ENCODE measurements at regions of chr1 and their contacts with region 1.

Region 1: DNA sequence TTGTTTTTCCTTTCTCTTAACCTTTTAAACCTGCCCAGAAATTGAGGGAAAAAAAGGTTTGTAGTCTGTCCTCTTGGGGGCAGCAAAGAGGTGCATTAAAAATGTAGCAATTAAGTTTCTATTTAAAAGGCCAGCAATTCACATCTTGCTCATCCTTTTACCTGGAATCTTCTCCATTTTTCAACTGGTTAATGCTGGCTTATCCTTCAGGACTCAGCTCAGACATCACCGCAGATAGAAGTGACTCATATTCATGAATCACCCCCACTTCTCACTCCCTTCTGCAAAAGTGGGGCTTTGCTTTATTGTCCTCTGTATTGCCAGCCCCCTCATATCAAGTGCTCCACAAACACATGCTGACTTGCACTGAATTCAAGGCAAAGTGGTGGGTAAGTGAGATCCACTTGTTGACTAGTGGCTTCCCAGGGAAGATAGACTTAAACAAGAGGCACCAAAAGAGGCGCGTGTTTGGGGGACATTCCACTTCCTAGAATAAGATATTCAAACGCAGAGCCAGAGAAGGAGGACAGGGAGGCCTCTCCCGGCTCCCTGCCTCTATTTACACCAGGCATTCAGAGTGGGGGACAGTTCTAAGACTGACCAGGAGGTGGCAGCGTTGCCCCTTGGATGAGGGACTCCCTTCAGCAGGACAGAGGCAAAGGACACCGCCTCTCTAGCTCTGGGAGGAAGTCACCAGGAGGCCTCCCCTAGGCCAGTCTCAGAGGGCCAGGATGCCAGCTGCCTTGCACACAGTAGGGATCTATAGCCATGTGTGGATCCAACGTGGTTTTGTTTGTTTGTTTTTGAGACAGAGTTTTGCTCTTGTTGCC is 23.2 kb upstream of the ZNF648 start:
- DNase-seq: peak; percentile 86 to 92
- H3K4me3 ChIP-seq: no peak overlapping the region
- H3K4me3 Mint-ChIP-seq: no peak overlapping the region
- H3K27ac Mint-ChIP-seq: no peak overlapping the region
- H3K4me1 ChIP-seq: peaks cover 33% of the 10 kb centered on the region
- H3K4me1 Mint-ChIP-seq: peaks cover 8% of the 10 kb centered on the region
- H3K27me3 ChIP-seq: no peaks in the 10 kb centered on the region
- H3K27me3 Mint-ChIP-seq: no peaks in the 10 kb centered on the region
- CTCF ChIP-seq: peak; percentile 72 to 92

Region 2: GRCh38 chr1:181479137-181479745 is 605.5 kb before region 1 on chr1:
- CTCF ChIA-PET with region 1: interaction called, 18 read pairs
- POLR2A ChIA-PET with region 1: no interaction called
- intact Hi-C with region 1: loop called (anchors 2 kb)
- DNase-seq: peak; percentile 52 to 66
- H3K4me3 ChIP-seq: no peak overlapping the region
- H3K4me3 Mint-ChIP-seq: no peak overlapping the region
- H3K27ac Mint-ChIP-seq: no peak overlapping the region
- H3K4me1 ChIP-seq: no peaks in the 10 kb centered on the region
- H3K4me1 Mint-ChIP-seq: peaks cover 7% of the 10 kb centered on the region
- H3K27me3 ChIP-seq: no peaks in the 10 kb centered on the region
- H3K27me3 Mint-ChIP-seq: peaks cover 3% of the 10 kb centered on the region
- CTCF ChIP-seq: peak; percentile 74 to 88

Region 3: GRCh38 chr1:182054698-182055326 is 29.9 kb before region 1 on chr1:
- CTCF ChIA-PET with region 1: interaction called, 12 read pairs
- POLR2A ChIA-PET with region 1: no interaction called
- intact Hi-C with region 1: no loop called
- DNase-seq: peak in 1 of 2 experiments; percentile 64
- H3K4me3 ChIP-seq: no peak overlapping the region
- H3K4me3 Mint-ChIP-seq: no peak overlapping the region
- H3K27ac Mint-ChIP-seq: no peak overlapping the region
- H3K4me1 ChIP-seq: no peaks in the 10 kb centered on the region
- H3K4me1 Mint-ChIP-seq: no peaks in the 10 kb centered on the region
- H3K27me3 ChIP-seq: no peaks in the 10 kb centered on the region; the same call in 1 of the 2 replicates
- H3K27me3 Mint-ChIP-seq: no peaks in the 10 kb centered on the region
- CTCF ChIP-seq: peak; percentile 32 to 45

Region 4: DNA sequence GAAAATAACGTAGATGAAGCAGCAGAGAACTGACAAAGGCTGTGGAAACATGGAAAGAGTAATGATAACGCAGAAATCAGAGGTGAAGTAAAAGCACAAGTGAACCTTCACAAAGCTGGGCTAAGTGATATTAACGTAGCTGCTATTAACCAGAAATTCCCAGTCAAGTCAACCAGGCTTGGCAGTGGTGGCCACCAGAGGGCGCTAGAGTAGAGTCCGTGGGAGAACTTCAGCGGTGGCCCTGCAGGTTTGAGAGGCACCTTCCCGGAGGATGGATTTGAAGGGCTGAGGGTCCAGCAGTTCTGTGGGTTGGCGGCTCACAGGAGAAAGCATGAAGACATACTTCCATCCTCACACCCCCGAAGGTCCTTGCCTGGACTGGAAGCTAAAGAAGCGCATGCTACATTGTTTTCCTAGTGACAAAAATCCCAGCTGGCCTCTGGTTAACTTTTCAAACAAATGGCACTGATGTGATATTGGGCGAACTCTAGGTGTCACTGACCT is 58.5 kb after region 1 on chr1:
- CTCF ChIA-PET with region 1: interaction called, 20 read pairs
- POLR2A ChIA-PET with region 1: no interaction called
- intact Hi-C with region 1: loop called (anchors 1 kb)
- DNase-seq: peak; percentile 87 to 92
- H3K4me3 ChIP-seq: no peak overlapping the region
- H3K4me3 Mint-ChIP-seq: no peak overlapping the region
- H3K27ac Mint-ChIP-seq: peak overlapping the region; percentile 63
- H3K4me1 ChIP-seq: peaks cover 34% of the 10 kb centered on the region
- H3K4me1 Mint-ChIP-seq: peaks cover 48% of the 10 kb centered on the region
- H3K27me3 ChIP-seq: no peaks in the 10 kb centered on the region
- H3K27me3 Mint-ChIP-seq: no peaks in the 10 kb centered on the region
- CTCF ChIP-seq: peak; percentile 92 to 97

Region 5: DNA sequence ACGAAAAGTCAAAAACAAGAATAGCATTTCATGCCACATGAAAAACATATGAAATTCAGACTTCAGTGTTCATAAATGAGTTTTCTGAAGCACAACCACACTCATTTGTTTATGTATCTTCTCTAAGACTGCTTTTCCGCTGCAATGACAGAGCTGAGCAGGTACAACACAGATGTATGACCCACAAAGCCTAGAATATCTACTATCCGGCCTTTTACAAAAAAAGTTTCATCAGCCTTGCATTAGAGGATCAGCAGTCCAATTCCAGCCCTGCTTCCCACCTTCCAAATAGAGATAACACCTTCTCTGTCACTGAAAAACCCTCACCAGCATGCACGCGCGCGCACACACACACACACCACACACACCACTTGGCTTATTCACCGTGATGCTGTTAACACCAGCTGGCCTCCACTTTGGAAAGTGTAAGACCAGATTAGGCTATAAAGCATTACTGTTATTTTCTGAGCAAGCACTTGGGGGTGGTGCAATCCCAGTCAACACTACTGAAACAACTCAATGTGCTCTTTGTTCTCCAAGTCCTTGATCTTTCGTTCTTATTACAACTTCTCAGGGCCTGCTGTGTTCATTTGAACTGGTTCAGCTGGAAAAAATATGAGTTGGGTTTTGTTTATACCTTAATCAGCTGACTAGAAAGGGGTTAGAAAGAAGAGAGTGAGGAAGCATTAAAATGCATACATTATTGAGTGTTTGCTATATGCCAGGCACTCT is 216.9 kb after region 1 on chr1:
- CTCF ChIA-PET with region 1: interaction called, 3 read pairs
- POLR2A ChIA-PET with region 1: no interaction called
- intact Hi-C with region 1: loop called (anchors 1 kb)
- DNase-seq: peak; percentile 50 to 61
- H3K4me3 ChIP-seq: no peak overlapping the region
- H3K4me3 Mint-ChIP-seq: no peak overlapping the region
- H3K27ac Mint-ChIP-seq: peak overlapping the region; percentile 29
- H3K4me1 ChIP-seq: peaks cover 30% of the 10 kb centered on the region
- H3K4me1 Mint-ChIP-seq: peaks cover 31% of the 10 kb centered on the region
- H3K27me3 ChIP-seq: no peaks in the 10 kb centered on the region
- H3K27me3 Mint-ChIP-seq: no peaks in the 10 kb centered on the region
- CTCF ChIP-seq: no peak

Region 6: GRCh38 chr1:182446033-182446669 is 361.4 kb after region 1 on chr1:
- CTCF ChIA-PET with region 1: no interaction called
- POLR2A ChIA-PET with region 1: no interaction called
- intact Hi-C with region 1: loop called (anchors 1 kb)
- DNase-seq: peak in 1 of 2 experiments; percentile 53
- H3K4me3 ChIP-seq: no peak overlapping the region
- H3K4me3 Mint-ChIP-seq: no peak overlapping the region
- H3K27ac Mint-ChIP-seq: no peak overlapping the region
- H3K4me1 ChIP-seq: no peaks in the 10 kb centered on the region
- H3K4me1 Mint-ChIP-seq: no peaks in the 10 kb centered on the region
- H3K27me3 ChIP-seq: no peaks in the 10 kb centered on the region
- H3K27me3 Mint-ChIP-seq: no peaks in the 10 kb centered on the region
- CTCF ChIP-seq: peak; percentile 62 to 77

Region 7: DNA sequence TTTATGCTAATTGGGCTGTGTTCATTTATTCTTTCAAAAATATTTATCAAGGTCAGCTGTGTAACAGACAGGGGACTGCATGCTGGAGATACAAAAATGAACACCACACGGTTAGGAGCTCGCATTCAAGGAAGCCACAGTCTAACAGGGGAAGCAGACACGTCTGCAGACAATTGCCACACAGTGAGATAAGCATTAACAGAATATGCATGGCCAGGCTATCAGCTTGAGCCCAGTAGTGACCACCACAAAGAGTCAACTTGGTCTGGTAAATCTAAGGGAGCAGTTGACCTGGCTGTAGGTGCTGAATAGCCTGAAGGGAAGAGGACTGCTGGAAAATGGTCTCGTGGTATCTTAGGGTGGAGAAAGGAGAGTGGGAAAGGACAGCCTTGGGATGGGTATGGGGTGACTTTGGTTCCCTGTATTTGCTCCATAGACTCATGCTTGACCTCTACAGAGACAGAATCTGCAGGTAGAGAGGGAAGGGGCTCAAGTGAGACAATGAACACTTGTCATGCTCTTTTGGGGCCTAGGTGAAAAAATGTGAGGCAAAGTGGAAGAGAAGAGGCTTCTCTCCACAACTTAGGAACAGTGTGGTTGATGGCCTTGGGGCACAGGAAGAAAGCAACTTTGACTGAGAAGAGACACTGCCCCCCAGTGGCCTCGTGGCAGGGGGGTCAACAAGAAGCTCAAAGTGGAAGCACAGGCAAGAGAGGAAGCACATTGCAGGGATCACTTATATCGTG is 697.3 kb after region 1 on chr1:
- CTCF ChIA-PET with region 1: interaction called, 3 read pairs
- POLR2A ChIA-PET with region 1: no interaction called
- intact Hi-C with region 1: loop called (anchors 1 kb)
- DNase-seq: peak; percentile 74 to 78
- H3K4me3 ChIP-seq: no peak overlapping the region
- H3K4me3 Mint-ChIP-seq: no peak overlapping the region
- H3K27ac Mint-ChIP-seq: no peak overlapping the region
- H3K4me1 ChIP-seq: no peaks in the 10 kb centered on the region
- H3K4me1 Mint-ChIP-seq: peaks cover 11% of the 10 kb centered on the region
- H3K27me3 ChIP-seq: no peaks in the 10 kb centered on the region; the same call in 1 of the 2 replicates
- H3K27me3 Mint-ChIP-seq: peaks cover 2% of the 10 kb centered on the region
- CTCF ChIP-seq: peak; percentile 81 to 90

Region 8: GRCh38 chr1:182974506-182975191 is 889.9 kb after region 1 on chr1:
- CTCF ChIA-PET with region 1: no interaction called
- POLR2A ChIA-PET with region 1: no interaction called
- intact Hi-C with region 1: no loop called
- DNase-seq: peak in 1 of 2 experiments; percentile 36
- H3K4me3 ChIP-seq: no peak overlapping the region
- H3K4me3 Mint-ChIP-seq: peak overlapping the region; percentile 4
- H3K27ac Mint-ChIP-seq: peak overlapping the region; percentile 39
- H3K4me1 ChIP-seq: peaks cover 80% of the 10 kb centered on the region
- H3K4me1 Mint-ChIP-seq: peaks cover 29% of the 10 kb centered on the region
- H3K27me3 ChIP-seq: no peaks in the 10 kb centered on the region
- H3K27me3 Mint-ChIP-seq: no peaks in the 10 kb centered on the region
- CTCF ChIP-seq: no peak

Measured in Caco-2 (cell line).